Activated T-helper 2 cell treated with anti-CD3 and anti-CD28 coated beads, Interferon-gamma antibody, Interleukin-2, Interleukin-4, amounts not matched to agents 10 μg/mL and 5 μg/mL and 100 μg/mL, durations not matched to agents 14 hours and 24 hours and 36 hours (primary cell): ENCODE measurements at regions of chr12 and their contacts with region 1.

Region 1: GRCh38 chr12:46459861-46460545 is 87.4 kb upstream of the SLC38A2 start:
- DNase-seq: no peak
- H3K4me3 Mint-ChIP-seq: peak overlapping the region; percentile 80
- H3K27ac Mint-ChIP-seq: peak overlapping the region; percentile 96
- H3K4me1 Mint-ChIP-seq: peaks cover 54% of the 10 kb centered on the region
- H3K27me3 Mint-ChIP-seq: no peaks in the 10 kb centered on the region

Region 2: GRCh38 chr12:46268590-46269558 is 191.1 kb before region 1 on chr12 and contains the start of gene SLC38A1:
- intact Hi-C with region 1: loop called (anchors 2 kb)
- DNase-seq: peak; percentile 86
- H3K4me3 Mint-ChIP-seq: no peak within 1 kb of the TSS
- H3K27ac Mint-ChIP-seq: no peak within 1 kb of the TSS
- H3K4me1 Mint-ChIP-seq: peaks cover 26% of the 10 kb centered on the region
- H3K27me3 Mint-ChIP-seq: no peaks in the 10 kb centered on the region
- total RNA-seq, gene SLC38A1: 152 and 154 TPM in 2 replicates

Region 3: DNA sequence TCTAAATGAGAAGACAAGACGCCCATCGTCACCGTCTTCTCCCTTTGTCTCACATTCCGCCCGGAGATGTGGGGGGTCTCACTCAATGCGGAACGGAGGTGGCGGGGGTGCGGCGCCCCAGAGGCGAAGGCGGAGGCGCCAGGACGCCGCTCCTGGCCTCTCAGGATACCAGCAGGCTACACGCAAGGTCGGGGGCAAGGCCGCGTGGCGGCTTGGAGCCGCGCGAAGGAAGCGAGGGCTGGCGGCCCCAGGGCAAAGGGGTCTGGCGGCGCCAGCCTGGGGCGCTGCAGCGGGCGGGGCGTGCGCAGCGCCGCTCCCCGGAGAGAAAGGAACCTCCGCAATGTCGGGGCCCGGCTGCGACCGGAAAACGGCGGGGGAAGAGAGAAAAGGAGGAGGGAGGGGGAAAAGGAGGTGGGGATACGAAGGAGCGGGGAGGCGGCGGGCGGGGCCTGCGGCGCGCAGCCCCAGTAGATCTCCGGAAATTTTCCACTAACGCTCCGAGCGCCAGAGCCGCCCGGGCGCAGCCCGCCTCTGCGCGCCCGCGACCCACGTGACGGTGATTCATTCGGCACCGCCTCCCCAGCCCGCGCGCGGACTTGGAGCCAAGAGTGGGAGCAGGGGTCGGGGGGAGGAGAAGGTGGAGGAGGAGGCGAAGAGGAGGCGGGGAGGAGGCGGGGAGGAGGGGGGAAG is 76.9 kb before region 1 on chr12:
- intact Hi-C with region 1: loop called (anchors 2 kb)
- DNase-seq: peak; percentile 95
- H3K4me3 Mint-ChIP-seq: peak overlapping the region; percentile 85
- H3K27ac Mint-ChIP-seq: peak overlapping the region; percentile 92
- H3K4me1 Mint-ChIP-seq: peaks cover 55% of the 10 kb centered on the region
- H3K27me3 Mint-ChIP-seq: no peaks in the 10 kb centered on the region

Region 4: GRCh38 chr12:46517579-46517962 is 57.6 kb after region 1 on chr12:
- intact Hi-C with region 1: loop called (anchors 1 kb)
- DNase-seq: no peak
- H3K4me3 Mint-ChIP-seq: peak overlapping the region; percentile 45
- H3K27ac Mint-ChIP-seq: peak overlapping the region; percentile 93
- H3K4me1 Mint-ChIP-seq: peaks cover 77% of the 10 kb centered on the region
- H3K27me3 Mint-ChIP-seq: no peaks in the 10 kb centered on the region

Region 5: GRCh38 chr12:46546634-46547286 is 86.8 kb after region 1 on chr12:
- intact Hi-C with region 1: loop called (anchors 1 kb)
- DNase-seq: peak; percentile 22
- H3K4me3 Mint-ChIP-seq: peak overlapping the region; percentile 28
- H3K27ac Mint-ChIP-seq: peak overlapping the region; percentile 76
- H3K4me1 Mint-ChIP-seq: peaks cover 62% of the 10 kb centered on the region
- H3K27me3 Mint-ChIP-seq: no peaks in the 10 kb centered on the region

Region 6: DNA sequence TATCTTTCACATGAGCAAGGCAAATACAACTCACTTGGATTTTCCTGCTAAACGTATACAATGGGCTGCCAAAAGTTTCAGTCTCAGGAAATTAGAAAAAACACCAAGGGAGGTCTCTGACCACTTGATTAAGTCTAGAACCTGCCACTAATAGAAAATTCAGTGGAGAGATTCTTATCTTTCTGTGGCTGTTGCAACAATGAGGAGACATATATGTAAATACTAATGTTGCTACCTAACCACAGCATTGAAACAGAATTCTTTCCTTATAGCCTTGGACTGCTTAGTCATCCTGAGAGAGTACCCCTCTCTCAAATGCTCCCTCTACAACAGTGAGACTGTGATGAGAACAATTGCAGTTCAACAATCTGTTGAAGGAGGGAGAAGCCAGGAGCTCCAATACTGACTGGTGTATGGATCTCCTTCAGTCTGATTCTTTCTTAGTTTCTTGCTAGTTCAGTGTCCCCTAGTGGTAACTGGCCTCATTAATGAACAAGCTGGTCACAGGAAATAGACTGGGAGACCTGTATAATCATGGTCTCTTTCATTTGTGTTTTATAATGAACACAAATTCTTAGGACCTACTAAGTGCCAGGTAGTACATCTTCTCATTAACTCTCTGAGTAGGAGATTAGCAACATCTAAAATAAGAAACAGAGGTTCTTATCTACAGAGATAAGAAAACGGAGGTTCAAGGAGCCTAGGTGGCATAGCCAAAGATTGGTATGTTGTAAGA is 201.3 kb after region 1 on chr12:
- intact Hi-C with region 1: loop called (anchors 2 kb)
- DNase-seq: no peak
- H3K4me3 Mint-ChIP-seq: no peak overlapping the region
- H3K27ac Mint-ChIP-seq: peak overlapping the region; percentile 58
- H3K4me1 Mint-ChIP-seq: peaks cover 44% of the 10 kb centered on the region
- H3K27me3 Mint-ChIP-seq: no peaks in the 10 kb centered on the region